Mammary epithelial cell (primary cell): ENCODE measurements at regions of chr3 and their contacts with region 1.

Region 1: DNA sequence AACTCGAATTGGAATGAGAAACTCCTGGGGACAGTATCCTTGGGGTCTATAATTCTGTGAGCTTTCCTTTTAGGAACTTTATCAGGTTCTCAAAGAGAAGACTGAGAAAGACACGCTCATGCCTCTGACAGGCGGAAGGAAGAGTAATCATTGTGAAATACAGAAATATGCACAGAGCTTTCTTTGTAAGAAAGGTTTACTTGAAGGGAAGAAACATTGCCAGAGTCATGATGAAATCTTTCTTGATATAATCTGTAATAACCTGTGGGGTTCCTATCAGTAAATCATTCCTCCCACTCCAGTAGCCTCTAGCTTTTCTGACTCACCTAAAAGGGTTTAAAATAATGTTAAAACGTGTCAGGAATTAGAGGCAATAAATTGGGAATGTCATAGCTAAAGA is 83.6 kb upstream of the CCDC39 start:
- DNase-seq: peak; percentile 70
- H3K4me3 ChIP-seq: peak overlapping the region in 2 of 3 experiments; percentile 11
- H3K27ac ChIP-seq: no peak overlapping the region
- H3K4me1 ChIP-seq: peaks cover 5% of the 10 kb centered on the region
- H3K27me3 ChIP-seq: no peaks in the 10 kb centered on the region
- CTCF ChIP-seq: no peak

Region 2: GRCh38 chr3:180646187-180646790 is 116.6 kb before region 1 on chr3:
- CTCF ChIA-PET with region 1: interaction called, 16 read pairs
- dilution Hi-C with region 1: no loop called
- in situ Hi-C with region 1: no loop called
- intact Hi-C with region 1: no loop called
- DNase-seq: no peak
- H3K4me3 ChIP-seq: no peak overlapping the region
- H3K27ac ChIP-seq: no peak overlapping the region
- H3K4me1 ChIP-seq: no peaks in the 10 kb centered on the region
- H3K27me3 ChIP-seq: peaks cover 6% of the 10 kb centered on the region
- CTCF ChIP-seq: peak; percentile 38 to 42